ENCODE measurements at regions of chr2 and their contacts with region 1.

Region 1: GRCh38 chr2:234494361-234495250 is 2.3 kb downstream of the ARL4C start:
- DNase-seq: no peak
- CTCF ChIP-seq: no peak

Region 2: DNA sequence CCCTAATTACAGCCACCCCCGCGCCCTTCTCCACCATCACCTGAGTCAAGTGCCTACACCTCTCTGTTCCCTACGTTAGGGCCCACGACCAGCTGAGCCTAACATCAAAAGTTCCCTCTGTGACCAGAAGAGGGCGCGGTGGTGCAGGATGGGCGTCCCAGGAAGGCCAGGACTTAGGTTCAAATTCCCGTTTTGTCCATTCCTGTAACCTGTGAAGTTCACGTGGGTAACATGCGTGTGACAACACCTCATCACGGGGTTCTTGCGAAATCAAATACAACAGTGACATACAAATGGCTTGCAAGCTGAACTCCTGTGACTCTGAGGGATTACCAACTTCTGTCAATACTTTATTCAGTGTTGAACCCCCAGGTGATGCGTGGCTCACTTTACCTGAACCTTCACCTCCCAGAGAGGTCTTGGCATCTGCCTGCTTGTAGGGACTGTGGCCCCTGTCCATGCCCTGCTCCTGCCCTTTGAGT is 205.6 kb before region 1 on chr2:
- in situ Hi-C with region 1: loop called (anchors 5 kb)
- DNase-seq: peak; percentile 57
- CTCF ChIP-seq: peak; percentile 83

Region 3: GRCh38 chr2:234425619-234426603 is 68.7 kb before region 1 on chr2:
- in situ Hi-C with region 1: no loop called
- DNase-seq: no peak
- CTCF ChIP-seq: no peak

Region 4: GRCh38 chr2:234595829-234596228 is 101.2 kb after region 1 on chr2:
- in situ Hi-C with region 1: no loop called
- DNase-seq: no peak
- CTCF ChIP-seq: no peak

Region 5: DNA sequence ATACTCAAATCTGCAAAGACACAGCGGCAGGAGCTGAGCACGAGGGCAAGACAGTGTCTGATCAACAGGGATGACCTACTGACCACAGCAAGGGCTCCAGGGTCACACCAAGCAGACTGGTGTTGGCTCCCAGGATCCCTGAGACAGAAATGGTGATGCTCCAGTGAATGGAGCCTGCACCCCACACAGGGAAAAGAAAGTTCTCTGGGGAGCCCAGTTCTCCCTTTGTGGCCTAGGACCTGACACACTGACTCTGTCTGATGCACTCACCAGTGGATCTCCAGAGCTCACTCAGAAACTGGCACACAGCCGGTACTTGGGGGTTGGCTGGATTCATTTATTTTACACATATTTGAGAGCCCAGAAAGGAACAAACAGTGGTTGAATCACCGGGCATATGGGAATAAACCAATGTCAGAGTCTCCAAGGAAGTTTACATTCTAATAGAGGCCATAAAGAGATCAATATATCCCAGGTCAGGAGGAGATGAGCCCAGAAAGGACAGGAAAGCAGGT is 217.9 kb after region 1 on chr2:
- in situ Hi-C with region 1: no loop called
- DNase-seq: no peak
- CTCF ChIP-seq: no peak